ENCODE measurements at regions of chr15 and their contacts with region 1.

Region 1: GRCh38 chr15:31571671-31572070 is 245.0 kb downstream of the KLF13 start:
- DNase-seq: no peak
- ATAC-seq: no peak
- H3K4me3 ChIP-seq: no peak overlapping the region
- H3K27ac ChIP-seq: no peak overlapping the region
- H3K4me1 ChIP-seq: no peaks in the 10 kb centered on the region
- H3K27me3 ChIP-seq: no peaks in the 10 kb centered on the region
- CTCF ChIP-seq: no peak
- POLR2A ChIP-seq: no peak

Region 2: DNA sequence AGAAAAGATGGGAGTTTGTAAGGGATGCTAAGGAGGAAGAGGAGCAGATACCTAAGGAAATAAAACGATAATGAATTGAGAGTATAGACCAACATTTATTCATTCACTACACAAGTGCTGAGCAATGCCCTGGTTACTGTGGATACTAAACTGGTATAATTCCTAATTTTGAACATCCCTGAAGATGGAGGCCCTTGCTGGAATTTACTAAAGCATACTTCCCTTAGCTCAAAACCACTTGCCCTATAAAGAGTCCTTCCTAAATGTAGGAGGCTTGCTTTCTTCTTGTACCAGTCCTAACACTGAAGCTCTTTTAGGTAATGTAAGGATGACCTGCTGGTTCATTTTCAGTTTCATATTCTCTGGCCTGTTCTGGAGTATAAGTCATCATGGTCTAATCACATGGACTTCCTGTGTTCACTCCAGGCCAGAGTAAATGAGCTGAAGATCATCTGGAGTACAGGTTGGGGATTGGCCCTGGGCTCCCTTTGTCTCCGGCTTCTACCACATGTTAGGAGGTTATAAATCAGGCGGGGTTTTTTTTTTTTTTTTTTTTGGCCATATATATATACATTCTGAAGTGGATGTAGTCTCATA is 540.1 kb before region 1 on chr15:
- in situ Hi-C with region 1: no loop called
- intact Hi-C with region 1: no loop called
- DNase-seq: no peak
- ATAC-seq: peak in 1 of 2 donors; percentile 46
- H3K4me3 ChIP-seq: no peak overlapping the region
- H3K27ac ChIP-seq: peak overlapping the region in 2 of 4 donors; percentile 2 to 48
- H3K4me1 ChIP-seq: no peaks in the 10 kb centered on the region
- H3K27me3 ChIP-seq: no peaks in the 10 kb centered on the region
- CTCF ChIP-seq: no peak
- POLR2A ChIP-seq: no peak

Region 3: GRCh38 chr15:31511707-31512310 is 59.9 kb before region 1 on chr15:
- in situ Hi-C with region 1: no loop called
- intact Hi-C with region 1: loop called (anchors 10 kb)
- DNase-seq: no peak
- ATAC-seq: no peak
- H3K4me3 ChIP-seq: no peak overlapping the region
- H3K27ac ChIP-seq: no peak overlapping the region
- H3K4me1 ChIP-seq: peaks cover 0 to 5% of the 10 kb centered on the region in 2 donors
- H3K27me3 ChIP-seq: no peaks in the 10 kb centered on the region
- CTCF ChIP-seq: no peak
- POLR2A ChIP-seq: no peak